CD14-positive monocyte (primary cell): ENCODE measurements at regions of chr15 and their contacts with region 1.

Region 1: GRCh38 chr15:72554471-72555425 is 80.6 kb downstream of the ARIH1 start:
- DNase-seq: peak in 1 of 3 donors; percentile 8
- H3K4me3 ChIP-seq: no peak overlapping the region
- H3K4me3 Mint-ChIP-seq: no peak overlapping the region
- H3K27ac ChIP-seq: no peak overlapping the region
- H3K27ac Mint-ChIP-seq: peak overlapping the region in 4 of 7 donors; percentile 8 to 83 (median 46)
- H3K4me1 ChIP-seq: peaks cover 4 to 6% of the 10 kb centered on the region in 2 donors
- H3K4me1 Mint-ChIP-seq: peaks cover 13% of the 10 kb centered on the region
- H3K27me3 ChIP-seq: no peaks in the 10 kb centered on the region
- H3K27me3 Mint-ChIP-seq: no peaks in the 10 kb centered on the region
- CTCF ChIP-seq: no peak

Region 2: GRCh38 chr15:72616491-72617210 is 61.9 kb after region 1 on chr15:
- intact Hi-C with region 1: loop called in 1 of 2 experiments (anchors 10 kb)
- DNase-seq: no peak
- H3K4me3 ChIP-seq: no peak overlapping the region
- H3K4me3 Mint-ChIP-seq: no peak overlapping the region
- H3K27ac ChIP-seq: no peak overlapping the region
- H3K27ac Mint-ChIP-seq: peak overlapping the region in 1 of 7 donors; percentile 58
- H3K4me1 ChIP-seq: no peaks in the 10 kb centered on the region
- H3K4me1 Mint-ChIP-seq: no peaks in the 10 kb centered on the region
- H3K27me3 ChIP-seq: no peaks in the 10 kb centered on the region
- H3K27me3 Mint-ChIP-seq: peaks cover 0 to 5% (median 0%) of the 10 kb centered on the region in 3 donors
- CTCF ChIP-seq: no peak